Activated B cell treated with CpG ODN at 0.5 μM for 24 hours (primary cell): ENCODE measurements at regions of chr11 and their contacts with region 1.

Region 1: DNA sequence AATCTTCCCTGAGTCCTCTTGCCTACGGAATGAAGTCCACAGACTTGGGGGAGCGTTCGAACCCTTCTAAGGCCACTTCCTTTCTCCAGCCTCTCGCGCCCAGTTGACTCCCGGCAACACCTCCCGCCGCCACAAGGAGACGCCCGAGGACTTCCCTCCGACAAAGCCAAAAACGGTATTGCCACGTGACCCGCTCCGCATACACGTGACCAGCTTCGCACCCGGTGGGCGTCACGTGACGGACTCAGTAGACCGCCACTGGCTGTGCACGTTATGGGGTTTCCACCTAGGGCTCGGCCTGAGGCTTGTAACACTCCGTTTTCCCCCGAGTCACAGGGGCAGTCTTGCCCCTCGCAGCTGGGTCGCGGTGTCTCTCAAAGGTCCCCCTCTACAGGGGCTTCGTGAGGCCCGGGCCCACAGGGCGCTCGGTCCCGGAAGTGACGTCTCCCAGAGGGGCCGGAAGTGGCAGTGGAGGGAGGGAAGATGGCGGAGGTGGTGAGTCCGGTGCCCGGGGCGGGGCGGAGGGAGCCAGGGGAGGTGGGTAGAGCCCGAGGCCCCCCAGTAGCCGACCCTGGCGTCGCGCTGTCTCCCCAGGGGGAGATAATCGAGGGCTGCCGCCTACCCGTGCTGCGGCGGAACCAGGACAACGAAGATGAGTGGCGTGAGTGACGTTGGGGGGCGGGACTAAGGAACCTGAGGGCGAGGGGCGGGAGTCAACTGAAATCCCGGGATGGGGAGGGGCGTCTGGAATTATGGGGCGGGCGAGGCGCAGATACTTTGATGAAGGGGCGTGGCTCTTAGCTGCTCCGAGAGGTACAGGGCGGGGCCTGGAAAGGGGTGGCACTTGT is at the start of gene KAT5:
- DNase-seq: peak; percentile 98
- ATAC-seq: peak; percentile 81
- H3K4me3 Mint-ChIP-seq: peak within 1 kb of the TSS; percentile 95
- H3K27ac Mint-ChIP-seq: peak within 1 kb of the TSS; percentile 99
- H3K4me1 Mint-ChIP-seq: peaks cover 25% of the 10 kb centered on the region
- H3K27me3 Mint-ChIP-seq: no peaks in the 10 kb centered on the region
- CTCF ChIP-seq: peak; percentile 70
- total RNA-seq, gene KAT5: 108 and 120 TPM in 2 replicates

Region 2: GRCh38 chr11:65454696-65455456 is 257.1 kb before region 1 on chr11:
- CTCF ChIA-PET with region 1: no interaction called
- POLR2A ChIA-PET with region 1: no interaction called
- intact Hi-C with region 1: no loop called
- DNase-seq: peak; percentile 83
- ATAC-seq: peak; percentile 98
- H3K4me3 Mint-ChIP-seq: peak overlapping the region; percentile 95
- H3K27ac Mint-ChIP-seq: peak overlapping the region; percentile 90
- H3K4me1 Mint-ChIP-seq: peaks cover 32% of the 10 kb centered on the region
- H3K27me3 Mint-ChIP-seq: no peaks in the 10 kb centered on the region
- CTCF ChIP-seq: no peak

Region 3: GRCh38 chr11:65615229-65615941 is 96.6 kb before region 1 on chr11 and contains the start of gene PCNX3:
- CTCF ChIA-PET with region 1: no interaction called
- POLR2A ChIA-PET with region 1: interaction called, 15 read pairs
- intact Hi-C with region 1: no loop called
- DNase-seq: peak; percentile 96
- ATAC-seq: peak; percentile 90
- H3K4me3 Mint-ChIP-seq: peak within 1 kb of the TSS; percentile 97
- H3K27ac Mint-ChIP-seq: peak within 1 kb of the TSS; percentile 96
- H3K4me1 Mint-ChIP-seq: peaks cover 58% of the 10 kb centered on the region
- H3K27me3 Mint-ChIP-seq: no peaks in the 10 kb centered on the region
- CTCF ChIP-seq: no peak
- total RNA-seq, gene PCNX3: 45.3 and 51.4 TPM in 2 replicates

Region 4: GRCh38 chr11:65662799-65663638 is 49.0 kb before region 1 on chr11 and contains the start of gene RELA:
- CTCF ChIA-PET with region 1: no interaction called
- POLR2A ChIA-PET with region 1: interaction called, 12 read pairs
- intact Hi-C with region 1: loop called (anchors 2 kb)
- DNase-seq: peak; percentile 91
- ATAC-seq: peak; percentile 87
- H3K4me3 Mint-ChIP-seq: peak within 1 kb of the TSS; percentile 87
- H3K27ac Mint-ChIP-seq: peak within 1 kb of the TSS; percentile 93
- H3K4me1 Mint-ChIP-seq: peaks cover 35% of the 10 kb centered on the region
- H3K27me3 Mint-ChIP-seq: no peaks in the 10 kb centered on the region
- CTCF ChIP-seq: no peak
- total RNA-seq, gene RELA: 110 and 119 TPM in 2 replicates

Region 5: GRCh38 chr11:65745046-65745445 is 33.0 kb after region 1 on chr11:
- CTCF ChIA-PET with region 1: no interaction called
- POLR2A ChIA-PET with region 1: no interaction called
- intact Hi-C with region 1: no loop called
- DNase-seq: no peak
- ATAC-seq: no peak
- H3K4me3 Mint-ChIP-seq: no peak overlapping the region
- H3K27ac Mint-ChIP-seq: no peak overlapping the region
- H3K4me1 Mint-ChIP-seq: peaks cover 6% of the 10 kb centered on the region
- H3K27me3 Mint-ChIP-seq: peaks cover 4% of the 10 kb centered on the region
- CTCF ChIP-seq: no peak

Region 6: DNA sequence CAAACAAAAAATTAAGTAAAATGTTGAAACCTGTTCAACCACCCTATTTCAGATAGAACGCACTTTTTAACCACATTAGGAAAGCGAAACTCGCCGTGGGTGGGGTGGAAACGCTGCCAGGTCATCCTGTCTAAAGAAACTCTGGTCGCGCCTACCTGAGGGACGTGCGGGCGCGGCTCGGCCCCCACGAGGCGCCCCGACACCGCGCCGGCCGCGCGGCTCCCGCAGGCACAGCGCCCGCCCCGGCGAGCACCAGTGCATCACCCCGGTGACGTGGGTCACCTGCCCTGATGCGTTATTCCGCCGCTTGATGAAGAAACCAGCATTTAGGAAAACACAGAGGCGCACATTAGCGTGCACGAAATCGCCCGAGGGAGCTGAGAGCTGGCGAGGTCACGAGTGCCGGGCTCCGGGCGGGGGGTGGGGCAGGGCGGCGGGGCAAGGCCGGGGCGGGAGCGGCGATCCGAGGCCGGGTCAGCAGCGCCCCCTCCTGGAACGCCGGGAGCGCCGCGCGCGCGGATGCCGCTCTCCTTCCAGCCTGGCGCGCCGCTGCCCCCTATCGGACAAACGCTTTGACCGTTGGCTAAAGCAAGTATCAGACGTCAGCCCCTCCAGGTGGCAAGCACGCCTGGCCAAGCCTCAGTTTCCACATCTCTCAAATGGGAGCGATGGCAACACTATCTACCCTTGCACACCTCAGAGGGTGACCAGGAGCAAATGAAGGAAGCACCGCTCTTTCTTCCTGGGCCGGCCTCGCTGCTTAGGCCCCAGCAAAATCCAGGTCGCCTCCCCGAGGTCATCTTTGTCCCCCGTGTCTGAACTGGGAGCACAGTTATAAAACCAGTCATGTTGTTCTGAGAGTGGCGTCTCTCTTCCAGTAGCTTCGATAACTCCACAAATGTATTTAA is 106.1 kb after region 1 on chr11:
- CTCF ChIA-PET with region 1: interaction called, 26 read pairs
- POLR2A ChIA-PET with region 1: interaction called, 25 read pairs
- intact Hi-C with region 1: loop called (anchors 1 kb)
- DNase-seq: peak; percentile 95
- ATAC-seq: peak; percentile 95
- H3K4me3 Mint-ChIP-seq: peak overlapping the region; percentile 77
- H3K27ac Mint-ChIP-seq: peak overlapping the region; percentile 63
- H3K4me1 Mint-ChIP-seq: peaks cover 14% of the 10 kb centered on the region
- H3K27me3 Mint-ChIP-seq: no peaks in the 10 kb centered on the region
- CTCF ChIP-seq: peak; percentile 96

Region 7: GRCh38 chr11:65888163-65888814 is 176.3 kb after region 1 on chr11 and contains the start of gene FIBP:
- CTCF ChIA-PET with region 1: interaction called, 15 read pairs
- POLR2A ChIA-PET with region 1: interaction called, 25 read pairs
- intact Hi-C with region 1: loop called (anchors 1 kb)
- DNase-seq: peak; percentile 91
- ATAC-seq: peak; percentile 63
- H3K4me3 Mint-ChIP-seq: peak within 1 kb of the TSS; percentile 98
- H3K27ac Mint-ChIP-seq: peak within 1 kb of the TSS; percentile 95
- H3K4me1 Mint-ChIP-seq: peaks cover 70% of the 10 kb centered on the region
- H3K27me3 Mint-ChIP-seq: no peaks in the 10 kb centered on the region
- CTCF ChIP-seq: peak; percentile 23
- total RNA-seq, gene FIBP: 74.5 and 76.5 TPM in 2 replicates

Region 8: GRCh38 chr11:66022401-66023185 is 310.6 kb after region 1 on chr11:
- CTCF ChIA-PET with region 1: no interaction called
- POLR2A ChIA-PET with region 1: interaction called, 20 read pairs
- intact Hi-C with region 1: no loop called
- DNase-seq: peak; percentile 82
- ATAC-seq: peak; percentile 98
- H3K4me3 Mint-ChIP-seq: peak overlapping the region; percentile 24
- H3K27ac Mint-ChIP-seq: no peak overlapping the region
- H3K4me1 Mint-ChIP-seq: peaks cover 4% of the 10 kb centered on the region
- H3K27me3 Mint-ChIP-seq: peaks cover 8% of the 10 kb centered on the region
- CTCF ChIP-seq: peak; percentile 25

Region 9: DNA sequence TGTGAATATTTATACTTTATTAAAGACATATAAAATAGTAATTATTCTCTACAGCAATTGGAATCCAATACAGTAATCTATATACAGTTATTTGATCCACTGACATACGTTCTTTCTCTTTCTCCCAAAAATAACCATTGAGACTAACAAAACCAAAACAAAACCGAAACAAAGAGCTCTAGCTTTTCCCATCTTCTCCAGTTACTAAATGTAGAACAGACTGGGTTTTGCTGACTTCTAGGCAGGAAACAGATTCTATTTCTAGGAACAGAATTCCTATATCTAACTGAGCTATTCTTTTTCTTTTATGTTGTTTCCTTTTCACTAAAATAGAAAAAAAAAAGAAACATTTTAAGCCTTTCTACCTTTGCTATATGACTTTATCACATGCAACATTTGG is 438.1 kb after region 1 on chr11:
- CTCF ChIA-PET with region 1: no interaction called
- POLR2A ChIA-PET with region 1: no interaction called
- intact Hi-C with region 1: no loop called
- DNase-seq: no peak
- ATAC-seq: no peak
- H3K4me3 Mint-ChIP-seq: no peak overlapping the region
- H3K27ac Mint-ChIP-seq: peak overlapping the region; percentile 4
- H3K4me1 Mint-ChIP-seq: peaks cover 54% of the 10 kb centered on the region
- H3K27me3 Mint-ChIP-seq: no peaks in the 10 kb centered on the region
- CTCF ChIP-seq: no peak